Endothelial cell of umbilical vein (primary cell): ENCODE measurements at regions of chr11 and their contacts with region 1.

Region 1: DNA sequence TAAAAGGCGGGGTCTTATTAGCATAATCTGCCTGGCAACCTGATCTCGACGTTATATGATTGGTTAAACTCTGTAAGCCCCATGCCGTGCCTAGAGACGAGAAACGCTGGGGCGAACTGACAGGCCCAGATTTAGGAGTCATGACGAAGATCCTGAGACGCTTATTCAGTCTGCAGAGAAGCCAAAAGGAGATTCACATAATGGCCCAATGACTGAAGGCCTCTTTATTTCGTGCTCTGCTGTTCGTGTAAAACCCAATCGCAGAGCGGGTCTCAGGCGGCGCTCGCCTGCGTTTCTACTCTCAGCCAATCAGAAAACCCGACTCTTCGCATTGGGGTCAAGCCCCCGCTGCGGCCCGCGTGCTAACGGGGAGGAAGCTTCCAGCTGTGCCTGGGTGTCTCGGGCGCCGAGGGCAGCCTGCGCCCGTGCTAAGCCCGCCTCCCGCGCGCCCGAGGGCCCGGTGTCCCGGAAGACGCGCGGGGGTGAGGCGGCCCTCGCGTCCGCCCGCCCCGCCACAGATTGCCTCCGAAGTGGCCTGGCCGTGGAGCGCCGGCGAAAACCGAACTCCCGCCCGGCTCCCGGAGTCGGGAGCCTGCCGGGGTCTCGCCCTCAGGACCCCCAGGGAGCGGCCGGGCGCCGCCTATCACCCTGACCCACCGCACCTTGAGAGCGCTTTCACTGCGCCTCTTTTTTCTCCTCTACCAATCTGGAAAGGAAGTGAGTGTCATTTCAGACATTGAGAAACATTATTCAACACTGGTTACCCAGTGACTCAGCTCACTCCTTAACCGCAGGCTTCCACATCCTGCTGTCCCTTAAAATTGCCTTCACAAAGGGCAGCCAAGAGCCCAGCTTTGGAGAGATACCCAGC is 446 bp upstream of the PRDM10 start:
- DNase-seq: peak; percentile 98
- H3K4me3 ChIP-seq: peak overlapping the region; percentile 1 to 94 (median 53)
- H3K27ac ChIP-seq: peak overlapping the region; percentile 92
- H3K4me1 ChIP-seq: peaks cover 9% of the 10 kb centered on the region
- H3K27me3 ChIP-seq: no peaks in the 10 kb centered on the region
- CTCF ChIP-seq: no peak
- POLR2A ChIP-seq: peak; percentile 70

Region 2: DNA sequence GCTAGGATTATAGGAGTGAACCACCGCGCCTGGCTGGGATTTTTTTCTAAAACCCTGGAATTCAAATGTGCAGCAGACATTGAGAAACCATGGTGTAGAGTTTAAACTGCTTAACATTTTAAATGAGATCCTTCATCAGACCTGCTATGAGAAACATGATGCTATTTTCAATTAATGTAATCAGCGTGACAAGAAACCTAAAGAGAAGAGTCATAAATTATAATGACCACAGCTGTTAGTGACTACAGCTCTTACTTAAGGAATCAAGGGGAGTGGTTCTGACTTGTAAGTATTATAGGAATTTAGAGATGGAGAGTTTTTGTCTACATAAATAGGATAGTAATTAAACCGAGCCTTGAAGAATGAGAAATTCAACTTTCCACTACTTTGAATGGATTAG is 456.8 kb before region 1 on chr11:
- CTCF ChIA-PET with region 1: no interaction called
- POLR2A ChIA-PET with region 1: no interaction called
- dilution Hi-C with region 1: no loop called
- intact Hi-C with region 1: no loop called
- DNase-seq: no peak
- H3K4me3 ChIP-seq: no peak overlapping the region
- H3K27ac ChIP-seq: no peak overlapping the region
- H3K4me1 ChIP-seq: no peaks in the 10 kb centered on the region
- H3K27me3 ChIP-seq: no peaks in the 10 kb centered on the region
- CTCF ChIP-seq: no peak
- POLR2A ChIP-seq: no peak

Region 3: GRCh38 chr11:129922674-129923073 is 80.4 kb before region 1 on chr11:
- CTCF ChIA-PET with region 1: interaction called, 11 read pairs
- POLR2A ChIA-PET with region 1: no interaction called
- dilution Hi-C with region 1: no loop called
- intact Hi-C with region 1: loop called (anchors 1 kb)
- DNase-seq: no peak
- H3K4me3 ChIP-seq: no peak overlapping the region
- H3K27ac ChIP-seq: no peak overlapping the region
- H3K4me1 ChIP-seq: no peaks in the 10 kb centered on the region
- H3K27me3 ChIP-seq: no peaks in the 10 kb centered on the region
- CTCF ChIP-seq: no peak
- POLR2A ChIP-seq: no peak

Region 4: GRCh38 chr11:129992161-129992944 is 10.7 kb before region 1 on chr11:
- CTCF ChIA-PET with region 1: interaction called, 12 read pairs
- POLR2A ChIA-PET with region 1: no interaction called
- dilution Hi-C with region 1: no loop called
- intact Hi-C with region 1: no loop called
- DNase-seq: peak; percentile 31
- H3K4me3 ChIP-seq: no peak overlapping the region
- H3K27ac ChIP-seq: no peak overlapping the region
- H3K4me1 ChIP-seq: peaks cover 5% of the 10 kb centered on the region
- H3K27me3 ChIP-seq: no peaks in the 10 kb centered on the region
- CTCF ChIP-seq: peak in 1 of 2 donors; percentile 35
- POLR2A ChIP-seq: no peak

Region 5: DNA sequence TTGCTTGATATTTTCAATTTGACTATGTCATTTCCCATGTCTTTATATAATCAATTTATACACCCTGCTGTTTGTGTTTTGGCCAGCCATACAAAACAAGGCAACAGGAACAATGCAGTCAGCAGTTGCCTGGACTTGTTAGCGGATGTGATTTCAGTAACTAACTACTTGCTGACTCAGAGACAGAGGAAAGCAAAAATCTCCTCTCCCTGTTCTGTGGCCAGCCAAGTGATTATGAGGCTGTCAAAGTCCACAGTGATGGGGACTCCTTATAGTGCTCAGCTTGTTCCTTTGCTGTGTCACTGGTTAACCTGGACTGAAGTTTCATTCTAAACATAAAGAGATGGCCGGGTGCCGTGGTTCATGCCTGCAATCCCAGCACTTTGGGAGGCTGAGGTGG is 34.0 kb after region 1 on chr11:
- CTCF ChIA-PET with region 1: no interaction called
- POLR2A ChIA-PET with region 1: interaction called, 3 read pairs
- dilution Hi-C with region 1: no loop called
- intact Hi-C with region 1: loop called (anchors 1 kb)
- DNase-seq: peak; percentile 65
- H3K4me3 ChIP-seq: no peak overlapping the region
- H3K27ac ChIP-seq: peak overlapping the region; percentile 71
- H3K4me1 ChIP-seq: peaks cover 3% of the 10 kb centered on the region
- H3K27me3 ChIP-seq: no peaks in the 10 kb centered on the region
- CTCF ChIP-seq: no peak
- POLR2A ChIP-seq: no peak

Region 6: DNA sequence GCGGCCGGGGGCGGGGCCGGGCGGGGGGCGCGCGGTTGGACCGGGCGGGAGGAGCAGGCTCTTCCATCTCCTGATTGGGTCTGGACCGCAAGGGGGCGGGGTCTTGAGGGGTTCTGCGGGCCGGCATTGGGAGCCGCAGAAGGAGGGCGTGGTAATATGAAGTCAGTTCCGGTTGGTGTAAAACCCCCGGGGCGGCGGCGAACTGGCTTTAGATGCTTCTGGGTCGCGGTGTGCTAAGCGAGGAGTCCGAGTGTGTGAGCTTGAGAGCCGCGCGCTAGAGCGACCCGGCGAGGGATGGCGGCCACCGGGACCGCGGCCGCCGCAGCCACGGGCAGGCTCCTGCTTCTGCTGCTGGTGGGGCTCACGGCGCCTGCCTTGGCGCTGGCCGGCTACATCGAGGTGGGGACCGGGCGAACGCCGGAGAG is 66.6 kb after region 1 on chr11 and contains the start of gene APLP2:
- CTCF ChIA-PET with region 1: interaction called, 25 read pairs
- POLR2A ChIA-PET with region 1: interaction called, 45 read pairs
- dilution Hi-C with region 1: no loop called
- intact Hi-C with region 1: loop called (anchors 1 kb)
- DNase-seq: peak; percentile 98
- H3K4me3 ChIP-seq: peak within 1 kb of the TSS; percentile 56 to 96 (median 92)
- H3K27ac ChIP-seq: peak within 1 kb of the TSS; percentile 82
- H3K4me1 ChIP-seq: peaks cover 12% of the 10 kb centered on the region
- H3K27me3 ChIP-seq: no peaks in the 10 kb centered on the region
- CTCF ChIP-seq: no peak
- POLR2A ChIP-seq: peak; percentile 99
- total RNA-seq, gene APLP2: 503 and 543 TPM in 2 replicates